GM23248 (cell line): ENCODE measurements at regions of chrX and their contacts with region 1.

Region 1: GRCh38 chrX:20530406-20530921 is 263.8 kb upstream of the RPS6KA3 start:
- DNase-seq: peak; percentile 61
- H3K4me3 ChIP-seq: peak overlapping the region; percentile 65
- H3K27ac ChIP-seq: no peak overlapping the region; the same call in 1 of the 2 replicates
- H3K4me1 ChIP-seq: peaks cover 19% of the 10 kb centered on the region
- H3K27me3 ChIP-seq: no peaks in the 10 kb centered on the region

Region 2: DNA sequence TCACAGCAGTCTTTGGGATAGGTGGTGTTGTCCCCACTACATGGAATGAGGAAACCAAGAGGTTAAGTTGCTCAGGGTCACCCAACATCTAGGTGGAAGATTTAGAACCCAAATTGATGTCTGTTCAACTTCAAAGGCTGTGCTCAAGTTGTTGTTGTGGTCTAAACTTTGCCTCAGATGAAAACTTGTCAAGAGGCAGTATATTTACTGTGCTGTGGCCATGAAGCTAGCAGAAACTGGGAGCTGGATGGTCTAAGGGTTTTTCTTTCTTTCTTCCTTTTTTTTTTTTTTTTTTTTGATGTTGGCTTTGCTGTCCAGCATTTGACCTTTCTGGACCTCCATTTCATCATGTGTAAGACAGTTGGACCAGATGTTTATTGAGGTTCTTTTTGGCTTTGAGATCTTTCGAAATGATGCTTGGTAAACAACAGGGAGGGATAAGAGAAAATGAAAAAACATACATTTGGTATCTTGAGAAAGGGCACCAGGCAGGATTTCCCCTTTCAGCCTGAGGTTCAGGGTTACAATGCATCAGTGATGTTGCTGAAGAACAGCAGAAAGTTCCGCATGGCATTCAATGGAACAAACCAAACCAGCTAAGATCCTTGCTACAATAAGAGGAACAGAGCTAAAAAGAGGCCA is 97.6 kb before region 1 on chrX:
- in situ Hi-C with region 1: no loop called
- DNase-seq: no peak
- H3K4me3 ChIP-seq: no peak overlapping the region
- H3K27ac ChIP-seq: no peak overlapping the region
- H3K4me1 ChIP-seq: peaks cover 6% of the 10 kb centered on the region; the same call in 1 of the 2 replicates
- H3K27me3 ChIP-seq: no peaks in the 10 kb centered on the region

Region 3: DNA sequence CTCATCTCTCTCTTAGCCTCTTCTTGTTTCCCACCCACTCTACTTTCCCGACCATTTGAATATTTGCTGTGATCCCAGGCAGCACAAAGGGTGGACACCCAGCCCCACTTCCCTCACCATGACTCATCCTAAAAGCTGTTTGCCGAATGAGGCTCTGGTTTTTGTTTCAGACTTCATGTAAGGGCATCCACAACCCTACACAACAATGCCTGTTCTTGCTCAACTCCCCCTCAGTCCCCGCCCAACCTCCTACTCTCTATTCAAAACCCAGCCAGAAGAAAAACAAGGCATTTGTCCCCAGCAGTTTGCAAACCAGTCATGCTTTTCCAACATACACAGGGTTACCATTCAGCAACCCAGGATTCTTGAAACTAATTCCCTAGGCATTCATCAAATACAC is 327.3 kb after region 1 on chrX:
- in situ Hi-C with region 1: no loop called
- DNase-seq: peak; percentile 62
- H3K4me3 ChIP-seq: no peak overlapping the region
- H3K27ac ChIP-seq: peak overlapping the region; percentile 27; the same call in 1 of the 2 replicates
- H3K4me1 ChIP-seq: no peaks in the 10 kb centered on the region; the same call in 1 of the 2 replicates
- H3K27me3 ChIP-seq: no peaks in the 10 kb centered on the region

Region 4: GRCh38 chrX:21374163-21374993 is 843.9 kb after region 1 on chrX and contains the start of gene CNKSR2:
- in situ Hi-C with region 1: loop called (anchors 25 kb)
- DNase-seq: peak; percentile 50
- H3K4me3 ChIP-seq: peak within 1 kb of the TSS; percentile 71
- H3K27ac ChIP-seq: no peak within 1 kb of the TSS
- H3K4me1 ChIP-seq: no peaks in the 10 kb centered on the region
- H3K27me3 ChIP-seq: no peaks in the 10 kb centered on the region; the same call in 1 of the 2 replicates
- total RNA-seq, gene CNKSR2: 0.51 and 0.76 TPM in 2 replicates

Region 5: DNA sequence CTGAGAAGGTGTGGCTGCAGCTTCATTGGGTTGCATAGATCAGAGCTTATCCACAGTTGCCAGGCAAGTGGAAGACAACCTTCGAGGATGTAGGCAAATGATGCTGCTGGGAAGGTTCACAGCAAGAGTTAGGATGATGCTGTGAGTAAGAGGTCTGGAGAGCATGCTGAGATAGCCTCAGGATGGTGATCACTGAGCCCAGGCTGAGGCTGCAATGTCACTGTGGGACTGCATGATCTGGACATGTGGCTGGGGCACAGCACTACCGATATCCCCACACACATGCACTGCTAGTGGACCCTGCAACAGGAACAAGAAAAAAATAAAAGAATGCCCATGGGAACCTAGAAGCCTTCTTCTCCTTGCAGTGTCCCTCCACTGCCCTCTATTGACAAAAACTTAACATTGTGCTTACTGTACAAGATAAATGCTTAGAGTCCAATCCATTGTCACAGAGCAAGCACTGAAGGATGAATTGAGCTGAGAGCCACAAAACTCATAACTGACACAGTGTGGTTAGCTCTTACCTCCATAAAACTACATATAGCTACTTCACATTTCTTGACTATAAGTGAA is 949.3 kb after region 1 on chrX:
- in situ Hi-C with region 1: loop called (anchors 10 kb)
- DNase-seq: peak; percentile 57
- H3K4me3 ChIP-seq: no peak overlapping the region
- H3K27ac ChIP-seq: no peak overlapping the region
- H3K4me1 ChIP-seq: no peaks in the 10 kb centered on the region
- H3K27me3 ChIP-seq: no peaks in the 10 kb centered on the region

Region 6: GRCh38 chrX:21725496-21725895 is 1195.0 kb after region 1 on chrX:
- in situ Hi-C with region 1: loop called (anchors 10 kb)
- DNase-seq: peak; percentile 61
- H3K4me3 ChIP-seq: no peak overlapping the region
- H3K27ac ChIP-seq: no peak overlapping the region
- H3K4me1 ChIP-seq: peaks cover 4% of the 10 kb centered on the region
- H3K27me3 ChIP-seq: no peaks in the 10 kb centered on the region